Right ventricle myocardium inferior (tissue), 1 donor: ENCODE measurements at regions of chr18 and their contacts with region 1.

Region 1: DNA sequence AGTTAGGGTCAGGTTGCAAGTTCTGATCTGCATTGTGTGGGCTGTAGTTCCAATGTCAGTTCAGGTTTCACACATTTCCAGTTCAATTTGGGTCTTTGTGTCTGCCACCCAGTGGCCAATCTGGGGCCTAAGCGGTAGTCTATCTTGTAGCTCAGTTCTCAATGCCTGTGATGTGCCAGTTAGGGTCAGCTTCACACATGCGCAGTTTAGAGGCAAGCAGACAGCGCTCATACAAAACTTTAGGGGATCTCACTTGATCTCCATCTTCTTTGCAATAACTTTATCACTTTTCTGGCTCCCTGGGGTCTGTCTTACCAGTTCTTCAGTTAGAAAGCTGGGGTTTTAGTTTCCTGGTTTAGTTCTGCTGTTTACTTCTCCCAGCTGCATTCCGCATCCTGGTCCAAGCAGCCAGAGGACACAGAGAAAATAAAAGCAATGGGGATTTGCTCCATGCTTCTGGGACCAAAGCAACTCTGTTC is 11.0 kb upstream of the ZNF24 start:
- DNase-seq: peak; percentile 68
- ATAC-seq: peak; percentile 98

Region 2: DNA sequence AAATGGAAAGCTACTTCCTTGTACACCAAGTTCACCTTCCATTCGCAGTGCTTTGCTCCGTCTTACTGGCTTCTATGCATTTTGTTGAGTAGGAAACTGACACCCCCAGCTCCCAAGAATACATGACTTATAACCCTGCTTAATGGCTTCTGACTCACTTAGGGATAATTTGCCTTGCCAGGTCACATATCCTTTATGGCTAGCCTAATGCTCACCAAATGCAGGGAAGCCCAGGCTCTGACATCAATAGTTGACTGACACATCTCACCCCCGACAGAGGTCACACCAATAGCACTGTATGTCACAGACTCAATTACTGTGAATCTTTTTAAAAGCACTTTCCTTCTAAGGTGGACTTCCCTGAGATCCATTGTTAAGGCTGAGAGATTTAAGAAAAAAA is 497.9 kb before region 1 on chr18:
- intact Hi-C with region 1: no loop called
- DNase-seq: no peak
- ATAC-seq: no peak

Region 3: DNA sequence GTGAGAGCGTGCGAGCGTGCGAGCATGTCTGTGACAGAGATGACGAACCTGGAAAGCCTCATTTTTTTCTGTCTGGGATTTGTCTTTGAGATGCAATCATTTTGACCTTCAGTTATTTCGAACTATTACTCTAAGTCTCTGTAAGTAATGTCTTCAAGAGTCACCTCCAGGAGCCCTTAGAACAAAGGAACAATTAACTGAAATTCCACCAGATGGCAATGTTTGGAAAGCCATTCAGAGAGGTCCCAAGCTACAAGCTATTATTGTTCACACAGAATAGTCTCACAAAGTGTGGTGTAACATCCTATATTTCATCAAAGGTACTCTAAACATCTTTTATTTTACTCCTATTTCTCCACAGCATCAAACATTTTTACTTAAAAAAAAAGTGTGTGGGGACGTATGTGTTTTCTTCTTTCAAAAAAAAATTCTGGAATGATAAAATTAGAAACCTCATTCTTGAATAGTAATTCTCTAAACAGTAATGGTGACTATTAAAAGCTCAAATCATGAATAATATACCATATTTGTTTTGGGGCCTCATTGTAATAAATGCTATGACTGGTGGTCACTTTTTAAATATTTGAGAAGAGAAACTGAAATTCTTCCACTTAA is 349.1 kb before region 1 on chr18:
- intact Hi-C with region 1: loop called (anchors 5 kb)
- DNase-seq: no peak
- ATAC-seq: peak; percentile 87

Region 4: DNA sequence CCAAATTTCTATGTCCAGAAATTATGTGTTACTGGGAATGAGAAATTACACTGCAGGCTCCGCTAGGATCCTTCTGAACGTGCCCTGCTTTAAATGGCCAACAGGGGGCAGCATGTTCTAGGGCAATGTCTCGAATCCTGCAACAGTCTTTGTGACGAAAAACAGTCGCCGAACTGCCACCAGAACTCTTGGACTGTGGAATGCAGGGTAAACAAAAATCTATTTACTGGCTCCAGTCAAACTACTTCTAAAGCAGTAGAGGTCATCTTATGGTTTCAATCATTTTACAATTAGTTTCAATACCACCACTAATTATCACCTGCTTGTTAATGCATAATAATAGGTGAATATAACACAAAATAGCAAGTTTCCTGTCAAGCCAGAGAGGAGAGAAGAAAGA is 124.1 kb before region 1 on chr18:
- intact Hi-C with region 1: loop called (anchors 1 kb)
- DNase-seq: peak; percentile 83
- ATAC-seq: peak; percentile 89

Region 5: GRCh38 chr18:35282353-35282752 is 72.8 kb before region 1 on chr18:
- intact Hi-C with region 1: no loop called
- DNase-seq: no peak
- ATAC-seq: no peak

Region 6: GRCh38 chr18:35415511-35416073 is 60.4 kb after region 1 on chr18:
- intact Hi-C with region 1: no loop called
- DNase-seq: no peak
- ATAC-seq: peak; percentile 22